ENCODE measurements at regions of chr5 and their contacts with region 1.

Region 1: GRCh38 chr5:151651997-151652645 is 34.6 kb downstream of the SPARC start:
- H3K4me3 Mint-ChIP-seq: no peak overlapping the region
- H3K27ac Mint-ChIP-seq: no peak overlapping the region
- H3K4me1 Mint-ChIP-seq: peaks cover 7% of the 10 kb centered on the region
- H3K27me3 Mint-ChIP-seq: no peaks in the 10 kb centered on the region

Region 2: DNA sequence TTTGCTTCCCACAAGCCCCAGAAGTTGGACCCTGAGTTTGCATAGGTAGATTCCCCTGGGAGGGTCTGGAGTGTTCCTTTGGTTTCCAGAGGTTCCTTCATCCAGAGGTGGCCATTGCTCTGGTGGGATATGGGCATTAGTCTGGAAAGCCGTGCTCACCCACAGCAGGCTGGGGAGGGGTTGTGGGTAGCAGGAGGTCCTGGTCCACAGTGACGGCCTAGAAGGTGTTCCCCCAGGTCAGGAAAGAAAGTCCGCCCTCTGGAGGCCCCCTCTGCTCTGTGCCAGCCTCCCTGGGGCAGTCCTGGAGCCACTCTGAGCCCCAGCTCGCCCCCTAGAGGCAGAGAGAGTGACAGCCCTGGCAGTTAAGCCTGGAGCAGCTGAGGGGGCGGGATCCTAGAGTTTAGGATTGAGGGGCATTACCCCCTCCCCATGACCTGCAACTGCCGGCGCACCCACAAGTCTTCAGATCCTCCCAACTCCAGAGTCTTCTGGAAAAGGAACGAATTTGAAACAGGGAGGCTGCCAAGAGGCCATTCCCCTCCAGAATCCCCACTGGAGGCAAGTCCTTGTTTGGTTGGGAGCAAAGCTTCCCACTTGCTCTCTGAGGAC is 1107.4 kb before region 1 on chr5:
- intact Hi-C with region 1: no loop called
- H3K4me3 Mint-ChIP-seq: no peak overlapping the region
- H3K27ac Mint-ChIP-seq: no peak overlapping the region
- H3K4me1 Mint-ChIP-seq: no peaks in the 10 kb centered on the region
- H3K27me3 Mint-ChIP-seq: no peaks in the 10 kb centered on the region

Region 3: DNA sequence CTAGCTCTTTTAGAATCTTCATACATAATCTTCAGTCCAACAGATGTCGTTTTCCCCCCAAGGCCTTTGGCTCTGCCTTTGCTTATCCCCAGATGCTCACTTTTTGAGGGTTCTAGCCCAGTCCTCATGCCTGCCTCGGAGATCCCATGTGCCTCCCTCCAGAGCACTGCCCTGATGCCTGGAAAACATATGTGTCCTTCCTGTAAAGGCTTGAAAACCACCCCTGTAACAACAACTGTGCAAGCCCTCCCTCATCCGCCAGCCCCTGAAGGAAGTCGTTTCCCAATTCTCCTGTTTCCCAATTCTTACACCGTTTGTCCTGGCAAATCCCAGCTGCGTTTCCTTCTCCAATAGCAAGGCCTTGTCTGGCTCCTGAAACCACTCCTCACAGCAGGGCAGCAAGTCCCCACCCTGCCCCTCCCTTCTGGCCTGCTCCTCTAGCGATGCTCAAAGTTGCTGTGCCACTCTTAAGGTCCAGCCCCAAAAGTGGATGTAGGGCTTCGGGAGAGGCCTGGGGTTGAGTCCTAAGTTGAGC is 152.6 kb before region 1 on chr5:
- intact Hi-C with region 1: loop called (anchors 5 kb)
- H3K4me3 Mint-ChIP-seq: no peak overlapping the region
- H3K27ac Mint-ChIP-seq: peak overlapping the region; percentile 40
- H3K4me1 Mint-ChIP-seq: peaks cover 17% of the 10 kb centered on the region
- H3K27me3 Mint-ChIP-seq: no peaks in the 10 kb centered on the region

Region 4: GRCh38 chr5:151523335-151523734 is 128.8 kb before region 1 on chr5:
- intact Hi-C with region 1: loop called (anchors 2 kb)
- H3K4me3 Mint-ChIP-seq: no peak overlapping the region
- H3K27ac Mint-ChIP-seq: no peak overlapping the region
- H3K4me1 Mint-ChIP-seq: peaks cover 11% of the 10 kb centered on the region
- H3K27me3 Mint-ChIP-seq: no peaks in the 10 kb centered on the region